Activated B cell treated with CpG ODN at 0.5 μM for 24 hours (primary cell): ENCODE measurements at regions of chr5 and their contacts with region 1.

Region 1: DNA sequence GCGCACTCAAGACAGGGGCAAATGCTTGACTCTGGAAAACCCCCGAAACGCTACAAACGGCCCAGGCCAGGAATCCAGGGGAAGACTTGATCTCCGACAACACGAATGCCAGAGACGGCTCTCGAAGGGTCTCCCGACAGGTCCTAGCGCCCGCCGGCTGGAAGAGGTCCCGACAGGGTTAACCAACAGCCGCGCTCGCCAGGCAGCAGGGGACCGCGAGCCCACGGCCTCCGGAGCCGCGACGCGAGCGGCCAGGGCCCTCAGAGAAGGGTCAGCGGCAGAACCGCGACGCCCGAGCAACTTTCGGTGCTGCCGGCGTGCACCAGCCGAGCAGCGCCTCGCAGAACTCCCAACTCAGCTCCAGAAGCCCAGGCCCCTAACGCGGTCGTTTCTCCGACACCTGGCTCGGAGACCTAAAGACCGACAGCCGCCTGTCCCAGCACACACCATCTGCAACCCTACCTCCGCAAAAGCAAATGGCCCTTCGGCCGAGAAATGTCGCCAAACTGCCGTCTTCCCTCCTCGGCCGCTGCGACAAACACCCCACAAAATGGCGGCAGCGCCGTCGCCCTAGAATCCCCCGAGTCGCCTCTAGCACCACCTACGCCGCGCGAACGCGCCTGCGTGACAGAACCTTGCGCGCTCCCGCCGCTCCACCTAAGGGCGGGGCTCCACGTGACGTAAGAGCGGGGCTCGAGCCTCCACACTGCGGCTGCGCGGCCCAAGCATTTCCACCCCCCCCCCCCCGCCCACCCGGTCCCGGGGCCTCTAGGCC is at the start of gene CLK4:
- DNase-seq: peak; percentile 97
- ATAC-seq: peak; percentile 85
- H3K4me3 Mint-ChIP-seq: peak within 1 kb of the TSS; percentile 98
- H3K27ac Mint-ChIP-seq: peak within 1 kb of the TSS; percentile 98
- H3K4me1 Mint-ChIP-seq: peaks cover 59% of the 10 kb centered on the region
- H3K27me3 Mint-ChIP-seq: no peaks in the 10 kb centered on the region
- CTCF ChIP-seq: no peak
- total RNA-seq, gene CLK4: 62.4 and 65.3 TPM in 2 replicates

Region 2: GRCh38 chr5:178232124-178232919 is 394.3 kb before region 1 on chr5 and contains the start of gene PHYKPL:
- CTCF ChIA-PET with region 1: interaction called, 3 read pairs
- POLR2A ChIA-PET with region 1: no interaction called
- intact Hi-C with region 1: loop called (anchors 2 kb)
- DNase-seq: peak; percentile 74
- ATAC-seq: peak; percentile 75
- H3K4me3 Mint-ChIP-seq: peak within 1 kb of the TSS; percentile 86
- H3K27ac Mint-ChIP-seq: peak within 1 kb of the TSS; percentile 84
- H3K4me1 Mint-ChIP-seq: peaks cover 47% of the 10 kb centered on the region
- H3K27me3 Mint-ChIP-seq: no peaks in the 10 kb centered on the region
- CTCF ChIP-seq: no peak
- total RNA-seq, gene PHYKPL: 176 and 205 TPM in 2 replicates

Region 3: DNA sequence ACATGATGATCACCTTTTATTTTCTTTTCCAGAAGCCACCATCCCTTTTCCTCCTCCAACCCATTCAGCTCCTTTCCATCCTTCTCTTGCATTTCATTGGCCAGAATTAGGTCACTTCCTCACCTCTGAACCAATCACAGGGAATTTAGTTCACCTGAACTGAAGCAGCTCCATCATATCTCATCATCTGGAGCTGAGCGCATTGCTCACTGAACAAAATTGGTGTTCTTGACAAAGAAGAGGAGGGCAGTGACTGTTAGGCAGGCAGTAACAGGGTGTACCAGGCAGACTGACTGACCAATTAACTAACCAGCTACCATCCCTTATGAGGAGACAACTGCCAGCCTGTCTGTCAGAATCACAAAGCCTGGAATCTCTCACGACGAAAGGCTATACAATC is 105.6 kb after region 1 on chr5:
- CTCF ChIA-PET with region 1: interaction called, 5 read pairs
- POLR2A ChIA-PET with region 1: interaction called, 19 read pairs
- intact Hi-C with region 1: loop called (anchors 1 kb)
- DNase-seq: no peak
- ATAC-seq: no peak
- H3K4me3 Mint-ChIP-seq: no peak overlapping the region
- H3K27ac Mint-ChIP-seq: no peak overlapping the region
- H3K4me1 Mint-ChIP-seq: peaks cover 10% of the 10 kb centered on the region
- H3K27me3 Mint-ChIP-seq: peaks cover 2% of the 10 kb centered on the region
- CTCF ChIP-seq: no peak

Region 4: DNA sequence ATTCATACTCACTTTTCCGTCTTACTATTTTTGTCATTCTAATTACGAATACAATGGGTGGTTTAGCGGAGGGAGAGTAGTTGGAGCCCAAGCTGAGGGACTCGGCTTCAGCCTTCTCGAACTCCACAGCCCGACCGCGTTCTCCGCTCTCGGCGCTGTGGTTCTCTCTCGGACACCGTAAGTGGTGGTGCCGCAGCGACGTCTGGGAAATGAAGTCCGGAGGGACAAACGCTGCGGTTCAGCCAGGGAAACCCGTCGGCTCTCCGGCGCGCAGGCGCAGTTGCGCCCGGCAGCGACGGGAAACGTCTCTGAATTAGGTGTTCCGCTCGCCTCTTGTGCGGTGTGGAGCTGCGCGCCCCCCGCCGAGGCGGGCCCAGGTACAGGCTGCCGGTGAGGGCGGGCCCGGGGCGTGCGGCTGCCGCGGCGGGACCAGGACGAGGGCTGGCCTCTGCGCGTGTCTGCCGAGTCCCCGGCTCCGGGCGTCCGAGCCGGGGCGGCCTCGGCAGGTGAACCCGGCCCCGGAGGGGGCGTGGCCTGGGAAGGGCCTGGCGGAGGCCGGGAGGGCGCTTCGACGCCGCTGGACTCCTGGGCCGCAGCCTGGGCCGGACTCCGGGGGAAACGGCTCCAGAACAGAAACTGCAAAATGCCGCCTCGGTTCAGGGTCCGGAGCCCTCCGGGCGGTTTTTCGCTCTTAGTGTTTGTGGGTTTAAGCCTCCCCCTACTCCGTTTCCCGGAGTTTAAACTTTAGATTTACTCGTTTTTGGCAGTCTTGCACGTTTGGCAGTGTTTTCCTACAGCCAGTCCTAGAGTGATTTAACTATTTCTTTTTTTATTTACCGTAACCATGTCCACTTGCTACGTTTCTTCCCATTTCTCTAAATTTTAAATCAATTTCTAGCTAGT is 397.1 kb after region 1 on chr5 and contains the start of gene ZNF879:
- CTCF ChIA-PET with region 1: no interaction called
- POLR2A ChIA-PET with region 1: interaction called, 4 read pairs
- intact Hi-C with region 1: loop called (anchors 1 kb)
- DNase-seq: peak; percentile 94
- ATAC-seq: peak; percentile 92
- H3K4me3 Mint-ChIP-seq: peak within 1 kb of the TSS; percentile 93
- H3K27ac Mint-ChIP-seq: peak within 1 kb of the TSS; percentile 81
- H3K4me1 Mint-ChIP-seq: peaks cover 18% of the 10 kb centered on the region
- H3K27me3 Mint-ChIP-seq: peaks cover 2% of the 10 kb centered on the region
- CTCF ChIP-seq: no peak
- total RNA-seq, gene ZNF879: 8.2 and 9.4 TPM in 2 replicates

Region 5: GRCh38 chr5:179550511-179551230 is 924.0 kb after region 1 on chr5 and contains the start of gene RUFY1:
- CTCF ChIA-PET with region 1: no interaction called
- POLR2A ChIA-PET with region 1: no interaction called
- intact Hi-C with region 1: loop called (anchors 1 kb)
- DNase-seq: peak; percentile 91
- ATAC-seq: peak; percentile 70
- H3K4me3 Mint-ChIP-seq: peak within 1 kb of the TSS; percentile 97
- H3K27ac Mint-ChIP-seq: peak within 1 kb of the TSS; percentile 100
- H3K4me1 Mint-ChIP-seq: peaks cover 60% of the 10 kb centered on the region
- H3K27me3 Mint-ChIP-seq: no peaks in the 10 kb centered on the region
- CTCF ChIP-seq: no peak
- total RNA-seq, gene RUFY1: 83.0 and 95.8 TPM in 2 replicates

Region 6: DNA sequence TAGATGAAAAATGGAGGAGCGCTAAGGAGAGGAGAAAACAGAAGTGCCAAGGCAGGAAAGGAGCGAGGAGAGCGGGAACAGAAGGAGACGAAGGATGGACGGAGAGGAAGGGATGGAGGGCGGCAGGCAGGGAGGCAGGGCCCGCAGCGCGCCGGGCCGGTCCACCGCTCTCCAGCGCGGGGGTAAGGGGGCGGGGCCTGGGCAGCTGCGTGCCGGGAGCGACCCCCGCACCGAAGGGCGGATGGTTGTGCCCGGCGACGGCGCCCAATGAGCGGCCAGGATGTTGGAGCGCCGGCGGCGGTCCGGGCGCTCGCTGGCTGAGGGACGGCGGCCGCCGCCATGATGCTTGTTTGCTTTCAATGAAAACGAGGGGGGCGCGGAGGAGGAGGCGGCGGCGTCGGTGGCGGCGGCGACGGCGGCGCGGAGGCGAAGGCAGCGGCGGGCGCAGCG is 1867.4 kb after region 1 on chr5 and contains the start of gene CNOT6:
- CTCF ChIA-PET with region 1: no interaction called
- POLR2A ChIA-PET with region 1: no interaction called
- intact Hi-C with region 1: loop called (anchors 5 kb)
- DNase-seq: peak; percentile 95
- ATAC-seq: peak; percentile 92
- H3K4me3 Mint-ChIP-seq: peak within 1 kb of the TSS; percentile 88
- H3K27ac Mint-ChIP-seq: peak within 1 kb of the TSS; percentile 92
- H3K4me1 Mint-ChIP-seq: peaks cover 32% of the 10 kb centered on the region
- H3K27me3 Mint-ChIP-seq: no peaks in the 10 kb centered on the region
- CTCF ChIP-seq: no peak
- total RNA-seq, gene CNOT6: 24.9 and 25.7 TPM in 2 replicates